Common myeloid progenitor, CD34-positive (primary cell): ENCODE measurements at regions of chr15 and their contacts with region 1.

Region 1: DNA sequence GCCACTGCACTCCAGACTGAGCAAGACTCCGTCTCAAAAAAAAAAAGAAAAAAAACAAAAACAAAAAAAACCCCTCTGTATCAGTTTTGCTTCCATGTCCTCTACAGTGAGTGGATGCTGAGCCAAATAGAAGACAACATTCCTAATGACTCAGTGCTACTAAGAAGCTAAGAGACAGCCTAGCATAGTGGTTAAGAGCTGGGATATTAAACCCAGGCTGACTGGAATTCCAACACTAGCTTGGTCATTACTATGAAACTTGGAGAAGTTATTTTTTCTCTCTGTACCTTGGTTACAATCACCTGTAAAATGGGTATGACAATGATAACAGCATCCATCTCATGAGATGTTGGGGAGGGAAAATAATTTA is 60.9 kb upstream of the PYGO1 start:
- DNase-seq: no peak
- H3K4me3 ChIP-seq: no peak overlapping the region
- H3K27ac ChIP-seq: no peak overlapping the region
- H3K4me1 ChIP-seq: no peaks in the 10 kb centered on the region
- H3K27me3 ChIP-seq: no peaks in the 10 kb centered on the region

Region 2: DNA sequence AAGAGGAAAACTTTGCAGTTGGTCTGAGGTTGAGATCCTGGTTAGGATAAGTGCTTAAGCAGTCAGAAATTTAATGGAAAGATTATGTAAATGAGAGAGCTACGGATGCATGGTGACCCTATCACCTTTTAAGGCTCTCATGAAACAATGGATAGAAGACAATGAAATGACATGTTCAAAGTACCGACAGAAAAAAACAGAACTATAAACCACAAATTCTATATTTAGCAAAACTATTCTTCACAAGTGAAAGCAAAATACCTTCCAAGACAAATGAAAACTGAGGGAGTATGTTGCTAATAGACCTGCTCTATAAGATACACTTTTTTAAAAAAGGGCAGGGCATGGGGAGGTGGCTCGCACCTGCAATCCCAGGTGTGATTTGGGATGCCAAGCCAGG is 173.2 kb before region 1 on chr15:
- CTCF ChIA-PET with region 1: no interaction called
- POLR2A ChIA-PET with region 1: no interaction called
- DNase-seq: peak in 2 of 3 donors; percentile 45 to 58
- H3K4me3 ChIP-seq: peak overlapping the region in 4 of 7 experiments; percentile 6 to 42 (median 34)
- H3K27ac ChIP-seq: peak overlapping the region in 1 of 2 experiments; percentile 25
- H3K4me1 ChIP-seq: peaks cover 3 to 13% (median 7%) of the 10 kb centered on the region in 4 experiments
- H3K27me3 ChIP-seq: no peaks in the 10 kb centered on the region

Region 3: DNA sequence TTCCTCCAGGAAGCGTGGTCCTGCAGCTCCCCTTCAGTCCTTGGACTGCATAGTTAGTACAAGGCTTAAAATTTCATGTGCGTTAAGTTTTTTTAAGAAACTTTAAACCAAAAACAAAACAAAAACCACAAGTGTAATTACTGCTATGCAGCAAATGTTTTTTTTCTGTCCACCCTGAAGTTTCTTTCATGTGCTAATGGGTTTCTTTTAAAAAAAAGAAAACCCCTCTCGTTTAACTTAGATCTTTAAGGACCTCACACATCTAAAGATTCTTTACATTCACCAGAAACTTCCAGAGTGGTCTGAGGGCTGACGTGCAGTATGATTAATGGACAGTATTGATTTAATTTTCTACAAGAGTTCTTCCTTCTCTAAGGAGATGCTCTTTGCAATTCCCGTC is 11.1 kb after region 1 on chr15:
- CTCF ChIA-PET with region 1: interaction called, 10 read pairs
- POLR2A ChIA-PET with region 1: no interaction called
- DNase-seq: no peak
- H3K4me3 ChIP-seq: no peak overlapping the region
- H3K27ac ChIP-seq: no peak overlapping the region
- H3K4me1 ChIP-seq: no peaks in the 10 kb centered on the region
- H3K27me3 ChIP-seq: no peaks in the 10 kb centered on the region

Region 4: DNA sequence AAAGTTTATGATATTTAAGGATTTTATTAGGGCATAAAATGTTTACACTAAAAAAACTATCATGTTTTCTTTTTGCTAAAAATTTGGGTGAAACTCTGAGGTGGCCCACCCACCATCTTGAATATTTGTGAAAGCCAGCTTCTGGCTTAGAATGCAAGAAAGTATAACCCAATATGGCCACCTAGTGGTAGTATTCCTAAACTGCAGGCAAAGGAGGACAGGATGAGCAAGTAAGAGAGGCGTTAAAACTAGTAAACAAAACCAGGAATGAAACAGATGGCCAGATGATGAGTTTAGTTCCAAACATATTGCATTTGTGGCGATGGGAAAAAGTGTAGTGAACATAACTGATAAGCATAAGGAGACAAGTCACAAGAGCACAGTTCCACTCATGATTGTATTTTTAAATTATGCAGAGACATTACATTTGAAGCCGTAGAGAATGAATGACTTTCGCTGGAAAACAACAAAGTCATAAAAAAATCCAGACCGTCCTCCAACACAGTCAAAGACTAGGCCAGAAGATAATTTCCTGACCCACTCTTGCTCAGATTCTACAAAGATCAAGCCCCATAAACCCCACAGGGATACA is 197.2 kb after region 1 on chr15:
- CTCF ChIA-PET with region 1: interaction called, 19 read pairs
- POLR2A ChIA-PET with region 1: no interaction called
- DNase-seq: peak; percentile 72 to 86 (median 78)
- H3K4me3 ChIP-seq: no peak overlapping the region
- H3K27ac ChIP-seq: no peak overlapping the region
- H3K4me1 ChIP-seq: no peaks in the 10 kb centered on the region
- H3K27me3 ChIP-seq: no peaks in the 10 kb centered on the region